GM12878 (cell line): ENCODE measurements at regions of chr17 and their contacts with region 1.

Region 1: GRCh38 chr17:42019509-42020404 is at the start of gene NKIRAS2:
- DNase-seq: peak; percentile 50
- ATAC-seq: peak; percentile 84
- H3K4me3 ChIP-seq: peak within 1 kb of the TSS; percentile 88
- H3K27ac ChIP-seq: peak within 1 kb of the TSS; percentile 76
- H3K4me1 ChIP-seq: peaks cover 28% of the 10 kb centered on the region
- H3K27me3 ChIP-seq: no peaks in the 10 kb centered on the region
- CTCF ChIP-seq: peak; percentile 92 to 98 (median 98); a peak in 5 of 6 replicates
- EP300 ChIP-seq: no peak
- POLR2A ChIP-seq: peak; percentile 87
- RAD21 ChIP-seq: no peak
- polyA plus RNA-seq, gene NKIRAS2: 6.4 to 6.9 TPM

Region 2: DNA sequence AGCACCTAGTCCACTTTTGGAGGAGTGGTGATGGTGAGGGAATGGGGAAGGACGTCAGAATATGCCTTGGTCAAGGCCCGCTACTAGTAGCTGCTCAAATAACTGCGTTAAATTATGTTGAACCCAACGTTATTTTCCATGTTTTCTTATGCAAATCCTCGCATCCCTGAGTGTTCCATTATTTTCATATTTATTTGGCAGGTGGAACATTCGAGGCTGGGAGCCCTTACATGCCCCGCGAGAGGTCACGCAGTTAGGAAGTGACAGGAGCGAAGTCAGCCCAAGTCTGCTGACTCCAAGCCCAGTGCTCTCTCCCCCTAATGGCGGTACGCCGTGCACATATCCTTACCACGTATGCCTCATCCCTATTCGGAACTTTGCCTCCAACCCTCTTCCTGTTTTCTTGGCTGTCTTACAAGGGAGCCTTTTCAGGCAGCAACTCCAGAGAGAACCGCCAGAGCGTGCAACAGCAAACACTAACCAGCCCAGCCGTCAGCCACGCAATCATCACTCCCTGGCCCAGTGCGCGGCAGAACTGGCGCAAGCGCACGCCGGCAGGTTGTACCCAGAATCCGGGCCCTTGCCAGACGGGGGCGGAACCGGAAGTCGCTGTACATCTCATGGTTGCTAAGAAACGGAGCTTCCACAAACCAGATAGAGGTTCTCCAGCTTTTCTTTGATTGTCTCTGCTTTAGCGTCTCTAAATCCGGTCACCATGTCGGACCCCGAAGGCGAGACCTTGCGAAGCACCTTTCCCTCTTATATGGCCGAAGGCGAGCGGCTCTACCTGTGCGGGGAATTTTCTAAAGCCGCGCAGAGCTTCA is 89.5 kb before region 1 on chr17 and contains the start of gene ODAD4:
- CTCF ChIA-PET with region 1: no interaction called
- POLR2A ChIA-PET with region 1: interaction called, 10 read pairs
- RAD21 ChIA-PET with region 1: interaction called, 3 read pairs
- SMC1A ChIA-PET with region 1: no interaction called
- in situ Hi-C with region 1: no loop called
- intact Hi-C with region 1: no loop called
- DNase-seq: peak; percentile 76
- ATAC-seq: peak; percentile 100
- H3K4me3 ChIP-seq: peak within 1 kb of the TSS; percentile 81
- H3K27ac ChIP-seq: peak within 1 kb of the TSS; percentile 62
- H3K4me1 ChIP-seq: peaks cover 7% of the 10 kb centered on the region
- H3K27me3 ChIP-seq: no peaks in the 10 kb centered on the region
- CTCF ChIP-seq: peak in 2 of 3 experiments; percentile 30 to 48; a peak in 3 of 6 replicates
- EP300 ChIP-seq: no peak
- POLR2A ChIP-seq: peak; percentile 97
- RAD21 ChIP-seq: no peak
- polyA plus RNA-seq, gene ODAD4: 0.10 to 0.44 TPM

Region 3: GRCh38 chr17:41966463-41967140 is 53.2 kb before region 1 on chr17 and contains the start of gene CNP:
- CTCF ChIA-PET with region 1: interaction called, 85 read pairs
- POLR2A ChIA-PET with region 1: interaction called, 45 read pairs
- RAD21 ChIA-PET with region 1: interaction called, 53 read pairs
- SMC1A ChIA-PET with region 1: interaction called, 19 read pairs
- in situ Hi-C with region 1: no loop called
- intact Hi-C with region 1: loop called (anchors 2 kb)
- DNase-seq: peak; percentile 49
- ATAC-seq: peak; percentile 91
- H3K4me3 ChIP-seq: peak within 1 kb of the TSS; percentile 79
- H3K27ac ChIP-seq: peak within 1 kb of the TSS; percentile 87
- H3K4me1 ChIP-seq: peaks cover 6% of the 10 kb centered on the region
- H3K27me3 ChIP-seq: no peaks in the 10 kb centered on the region
- CTCF ChIP-seq: no peak
- EP300 ChIP-seq: no peak
- POLR2A ChIP-seq: peak; percentile 92
- RAD21 ChIP-seq: no peak
- polyA plus RNA-seq, gene CNP: 1.8 to 4.4 TPM

Region 4: GRCh38 chr17:41972571-41973411 is 47.0 kb before region 1 on chr17:
- CTCF ChIA-PET with region 1: interaction called, 85 read pairs
- POLR2A ChIA-PET with region 1: interaction called, 14 read pairs
- RAD21 ChIA-PET with region 1: interaction called, 16 read pairs
- SMC1A ChIA-PET with region 1: interaction called, 19 read pairs
- in situ Hi-C with region 1: no loop called
- intact Hi-C with region 1: loop called (anchors 2 kb)
- DNase-seq: no peak
- ATAC-seq: peak; percentile 86
- H3K4me3 ChIP-seq: no peak overlapping the region
- H3K27ac ChIP-seq: no peak overlapping the region
- H3K4me1 ChIP-seq: peaks cover 24% of the 10 kb centered on the region
- H3K27me3 ChIP-seq: no peaks in the 10 kb centered on the region
- CTCF ChIP-seq: no peak
- EP300 ChIP-seq: no peak
- POLR2A ChIP-seq: peak; percentile 49; the same call in 1 of the 2 replicates
- RAD21 ChIP-seq: no peak

Region 5: GRCh38 chr17:42090964-42091790 is 71.4 kb after region 1 on chr17:
- CTCF ChIA-PET with region 1: no interaction called
- POLR2A ChIA-PET with region 1: no interaction called
- RAD21 ChIA-PET with region 1: no interaction called
- SMC1A ChIA-PET with region 1: no interaction called
- in situ Hi-C with region 1: no loop called
- intact Hi-C with region 1: no loop called
- DNase-seq: no peak
- ATAC-seq: no peak
- H3K4me3 ChIP-seq: no peak overlapping the region
- H3K27ac ChIP-seq: no peak overlapping the region
- H3K4me1 ChIP-seq: no peaks in the 10 kb centered on the region
- H3K27me3 ChIP-seq: no peaks in the 10 kb centered on the region; a peak in 2 of 4 replicates
- CTCF ChIP-seq: no peak
- EP300 ChIP-seq: no peak
- POLR2A ChIP-seq: no peak
- RAD21 ChIP-seq: no peak

Region 6: GRCh38 chr17:42101513-42102319 is 82.0 kb after region 1 on chr17:
- CTCF ChIA-PET with region 1: interaction called, 10 read pairs
- POLR2A ChIA-PET with region 1: interaction called, 5 read pairs
- RAD21 ChIA-PET with region 1: interaction called, 3 read pairs
- SMC1A ChIA-PET with region 1: interaction called, 4 read pairs
- in situ Hi-C with region 1: no loop called
- intact Hi-C with region 1: no loop called
- DNase-seq: no peak
- ATAC-seq: peak; percentile 87
- H3K4me3 ChIP-seq: no peak overlapping the region
- H3K27ac ChIP-seq: no peak overlapping the region
- H3K4me1 ChIP-seq: peaks cover 5% of the 10 kb centered on the region
- H3K27me3 ChIP-seq: peaks cover 1 to 6% of the 10 kb centered on the region in 2 experiments; a peak in 1 of 4 replicates
- CTCF ChIP-seq: peak; percentile 84 to 92 (median 92)
- EP300 ChIP-seq: no peak
- POLR2A ChIP-seq: peak; percentile 36; the same call in 1 of the 2 replicates
- RAD21 ChIP-seq: peak; percentile 81

Region 7: DNA sequence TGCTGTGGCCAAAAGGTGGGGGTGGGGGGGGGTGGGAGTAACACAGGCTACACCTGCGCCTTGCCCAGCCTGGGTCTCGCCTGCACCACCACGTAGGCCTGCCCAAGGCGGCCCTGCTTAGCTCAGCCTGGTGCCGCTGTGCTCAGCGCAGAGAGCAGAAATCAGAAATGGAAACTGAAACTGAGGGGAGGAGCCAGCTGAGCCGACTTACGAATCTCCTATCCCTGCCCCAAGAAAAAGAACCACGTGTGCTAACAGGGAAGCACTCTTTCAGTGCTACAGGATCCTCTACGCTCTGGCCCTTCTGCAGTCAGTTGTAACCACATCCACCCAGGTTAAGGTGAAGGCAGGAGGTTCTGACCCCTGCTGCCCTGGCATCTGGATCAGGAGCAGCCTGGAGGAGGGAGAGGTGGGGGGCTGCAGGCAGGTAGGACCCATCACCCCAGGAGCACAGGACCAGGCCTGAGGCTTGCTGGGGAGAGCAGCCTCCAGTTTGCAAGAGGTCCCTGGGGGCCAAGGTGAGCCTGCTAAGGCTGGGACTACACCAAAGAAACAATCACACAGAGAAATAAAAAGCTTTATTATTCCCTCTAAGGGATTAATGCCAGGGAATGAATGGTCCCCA is 92.9 kb after region 1 on chr17 and contains the start of gene DHX58:
- CTCF ChIA-PET with region 1: interaction called, 83 read pairs
- POLR2A ChIA-PET with region 1: interaction called, 23 read pairs
- RAD21 ChIA-PET with region 1: interaction called, 17 read pairs
- SMC1A ChIA-PET with region 1: interaction called, 16 read pairs
- in situ Hi-C with region 1: loop called (anchors 5 kb)
- intact Hi-C with region 1: no loop called
- DNase-seq: peak; percentile 90
- ATAC-seq: peak; percentile 85
- H3K4me3 ChIP-seq: peak within 1 kb of the TSS; percentile 79
- H3K27ac ChIP-seq: peak within 1 kb of the TSS; percentile 98
- H3K4me1 ChIP-seq: peaks cover 37% of the 10 kb centered on the region
- H3K27me3 ChIP-seq: no peaks in the 10 kb centered on the region
- CTCF ChIP-seq: no peak
- EP300 ChIP-seq: no peak
- POLR2A ChIP-seq: peak; percentile 94
- RAD21 ChIP-seq: no peak
- polyA plus RNA-seq, gene DHX58: 3.5 to 3.7 TPM

Region 8: GRCh38 chr17:42120770-42121769 is 101.3 kb after region 1 on chr17 and contains the start of gene KAT2A:
- CTCF ChIA-PET with region 1: interaction called, 83 read pairs
- POLR2A ChIA-PET with region 1: interaction called, 12 read pairs
- RAD21 ChIA-PET with region 1: interaction called, 17 read pairs
- SMC1A ChIA-PET with region 1: interaction called, 16 read pairs
- in situ Hi-C with region 1: no loop called
- intact Hi-C with region 1: no loop called
- DNase-seq: no peak
- ATAC-seq: peak; percentile 94
- H3K4me3 ChIP-seq: peak within 1 kb of the TSS; percentile 82
- H3K27ac ChIP-seq: no peak within 1 kb of the TSS
- H3K4me1 ChIP-seq: peaks cover 5% of the 10 kb centered on the region
- H3K27me3 ChIP-seq: no peaks in the 10 kb centered on the region
- CTCF ChIP-seq: no peak
- EP300 ChIP-seq: no peak
- POLR2A ChIP-seq: peak; percentile 91
- RAD21 ChIP-seq: no peak
- polyA plus RNA-seq, gene KAT2A: 0.85 to 3.0 TPM

Region 9: GRCh38 chr17:42227849-42228615 is 208.3 kb after region 1 on chr17:
- CTCF ChIA-PET with region 1: no interaction called
- POLR2A ChIA-PET with region 1: no interaction called
- RAD21 ChIA-PET with region 1: no interaction called
- SMC1A ChIA-PET with region 1: no interaction called
- in situ Hi-C with region 1: no loop called
- intact Hi-C with region 1: no loop called
- DNase-seq: no peak
- ATAC-seq: no peak
- H3K4me3 ChIP-seq: no peak overlapping the region
- H3K27ac ChIP-seq: no peak overlapping the region
- H3K4me1 ChIP-seq: no peaks in the 10 kb centered on the region
- H3K27me3 ChIP-seq: no peaks in the 10 kb centered on the region
- CTCF ChIP-seq: no peak
- EP300 ChIP-seq: no peak
- POLR2A ChIP-seq: no peak
- RAD21 ChIP-seq: no peak